Psoas muscle (tissue), 8 donors: ENCODE measurements at regions of chr11 and their contacts with region 1.

Region 1: DNA sequence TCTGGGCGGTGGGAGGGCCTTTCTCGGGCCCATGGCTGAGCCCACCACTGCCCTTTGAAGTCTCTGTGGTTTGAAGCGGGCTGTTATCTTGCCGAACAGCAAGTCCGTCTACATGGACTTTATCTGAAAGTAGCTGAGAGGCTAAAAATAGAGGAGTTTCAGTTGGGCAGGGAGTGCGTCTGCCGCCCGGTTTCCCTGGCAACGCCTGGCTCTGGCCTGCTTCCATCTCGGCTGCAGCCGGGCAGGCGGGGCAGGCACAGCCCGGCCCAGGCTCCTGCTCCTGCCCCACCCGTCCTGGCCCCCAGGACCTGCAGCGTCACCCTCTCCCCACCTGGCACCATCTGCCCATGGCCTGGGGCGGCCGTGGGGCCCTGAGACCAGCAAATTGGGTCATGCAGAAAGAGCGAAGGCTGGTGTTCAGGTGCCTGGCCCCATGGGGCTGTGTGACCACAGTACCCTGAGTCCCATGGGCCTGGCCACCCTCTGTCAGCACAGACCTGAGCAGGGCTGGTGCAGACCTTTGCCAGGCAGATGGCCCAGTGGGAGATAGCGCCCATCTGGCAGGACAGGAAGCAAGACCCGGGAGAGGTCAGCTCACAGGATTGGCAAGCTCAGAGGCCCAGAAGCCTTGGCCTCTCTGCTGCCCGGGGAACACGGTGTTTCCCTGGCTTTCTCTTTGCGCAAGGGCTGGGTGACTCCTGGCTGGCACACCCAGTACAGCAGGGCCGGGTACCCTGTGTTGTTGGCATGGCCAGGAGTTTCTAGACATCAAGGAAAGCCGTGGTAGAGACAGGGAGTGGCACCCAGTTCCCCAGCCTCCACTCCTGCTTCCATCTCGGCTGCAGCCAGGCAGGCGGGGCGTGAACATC is 79.1 kb upstream of the KCNQ1OT1 start:
- DNase-seq: peak; percentile 67 to 90
- ATAC-seq: peak; percentile 85 to 96 (median 94)
- H3K4me3 ChIP-seq: peak overlapping the region; percentile 30
- H3K27ac ChIP-seq: peak overlapping the region; percentile 43
- H3K4me1 ChIP-seq: peaks cover 21% of the 10 kb centered on the region
- H3K27me3 ChIP-seq: no peaks in the 10 kb centered on the region
- CTCF ChIP-seq: peak; percentile 21

Region 2: GRCh38 chr11:2699531-2700414 is 79.1 kb before region 1 on chr11 and contains the start of gene KCNQ1OT1:
- intact Hi-C with region 1: loop called in 1 of 2 experiments (anchors 5 kb)
- DNase-seq: peak; percentile 90 to 94
- ATAC-seq: peak; percentile 87 to 92 (median 89)
- H3K4me3 ChIP-seq: peak within 1 kb of the TSS; percentile 72
- H3K27ac ChIP-seq: peak within 1 kb of the TSS; percentile 94
- H3K4me1 ChIP-seq: peaks cover 17% of the 10 kb centered on the region
- H3K27me3 ChIP-seq: no peaks in the 10 kb centered on the region
- CTCF ChIP-seq: no peak
- total RNA-seq, gene KCNQ1OT1: 0.30 to 0.56 (median 0.42) TPM

Region 3: DNA sequence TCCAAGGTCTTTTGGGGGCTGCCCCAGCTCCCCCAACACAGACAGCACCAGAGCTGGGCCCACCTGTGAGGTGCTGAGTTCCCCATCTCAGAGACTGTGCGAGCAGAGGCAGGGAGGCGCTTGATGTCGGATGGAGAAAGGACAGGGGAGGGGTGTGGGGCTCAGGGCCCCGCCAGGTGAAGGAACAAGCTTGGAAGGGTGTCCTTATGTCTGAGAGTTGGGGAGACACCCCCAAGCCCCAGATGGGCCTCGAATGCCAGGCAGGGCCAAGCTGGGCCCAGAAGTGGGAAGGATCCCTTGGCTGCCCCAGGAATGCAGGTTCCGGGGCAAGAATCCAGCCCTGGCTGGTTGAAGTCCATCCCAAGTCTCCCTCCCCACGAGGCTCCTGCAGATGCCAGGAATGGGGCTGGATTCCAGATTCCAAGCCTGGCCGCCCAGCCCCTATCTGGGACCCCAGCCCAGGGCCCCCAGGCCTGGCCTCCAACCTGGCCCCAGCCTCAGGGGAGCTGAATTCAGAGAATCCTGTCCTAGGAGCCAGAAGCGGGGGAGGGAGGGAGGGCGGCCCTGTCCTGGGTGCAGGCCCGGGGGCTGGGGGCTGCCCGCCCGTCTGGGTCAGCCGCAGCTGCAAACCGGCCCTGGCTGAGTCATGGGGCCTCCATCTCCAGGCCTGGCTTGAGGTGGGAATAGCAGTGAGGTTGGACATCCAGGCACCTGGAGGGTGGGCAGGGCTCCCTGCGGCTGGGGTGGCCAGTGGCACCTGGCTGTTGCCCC is 55.8 kb after region 1 on chr11:
- intact Hi-C with region 1: loop called in 1 of 2 experiments (anchors 5 kb)
- DNase-seq: peak in 1 of 2 donors; percentile 51
- ATAC-seq: no peak
- H3K4me3 ChIP-seq: no peak overlapping the region
- H3K27ac ChIP-seq: no peak overlapping the region
- H3K4me1 ChIP-seq: no peaks in the 10 kb centered on the region
- H3K27me3 ChIP-seq: no peaks in the 10 kb centered on the region
- CTCF ChIP-seq: no peak